HCT116 (cell line): ENCODE measurements at regions of chr17 and their contacts with region 1.

Region 1: DNA sequence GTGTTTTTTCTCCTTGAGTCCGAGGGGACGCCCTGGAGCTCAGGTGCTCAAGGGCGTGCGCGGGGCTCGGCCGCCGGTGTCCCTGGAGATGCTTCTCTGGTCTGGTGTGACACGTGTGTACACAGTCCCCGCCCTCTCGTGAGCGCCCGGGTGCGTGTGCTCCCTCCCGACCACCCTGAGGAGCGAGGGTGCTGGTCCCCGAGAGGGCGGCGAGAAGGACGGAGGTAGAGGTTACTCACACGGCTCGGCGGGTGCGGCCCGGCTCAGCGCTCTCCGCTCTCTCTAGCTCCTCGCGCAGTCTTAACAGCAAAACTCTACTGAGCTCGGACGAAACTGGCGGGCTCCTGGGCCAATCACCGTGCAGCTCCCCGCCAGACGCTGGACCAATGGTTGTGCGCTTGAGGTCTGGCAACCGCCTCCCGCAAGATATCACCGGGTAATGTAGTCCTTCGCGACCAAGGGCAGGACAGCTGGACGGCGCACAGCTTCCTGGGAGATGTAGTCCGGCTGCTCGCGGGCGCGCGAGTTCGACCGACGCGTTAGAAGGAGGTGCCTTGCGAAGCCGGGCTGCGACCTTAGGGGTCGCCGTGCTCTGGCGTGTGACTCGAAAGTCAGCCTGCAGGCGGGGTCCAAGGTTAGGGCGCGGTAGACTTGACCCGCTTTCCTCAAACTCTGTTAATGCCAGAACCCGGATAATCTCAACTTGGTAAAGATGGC is at the start of gene SLC25A19:
- DNase-seq: peak; percentile 99
- ATAC-seq: peak; percentile 97
- H3K4me3 ChIP-seq: peak within 1 kb of the TSS; percentile 83 to 98
- H3K27ac ChIP-seq: peak within 1 kb of the TSS; percentile 75
- H3K4me1 ChIP-seq: peaks cover 10 to 15% of the 10 kb centered on the region in 2 experiments
- H3K27me3 ChIP-seq: no peaks in the 10 kb centered on the region
- CTCF ChIP-seq: peak in 2 of 3 experiments; percentile 15 to 24; a peak in 1 of 6 replicates
- POLR2A ChIP-seq: peak; percentile 86
- RAD21 ChIP-seq: no peak
- total RNA-seq, gene SLC25A19: 38.7 TPM

Region 2: DNA sequence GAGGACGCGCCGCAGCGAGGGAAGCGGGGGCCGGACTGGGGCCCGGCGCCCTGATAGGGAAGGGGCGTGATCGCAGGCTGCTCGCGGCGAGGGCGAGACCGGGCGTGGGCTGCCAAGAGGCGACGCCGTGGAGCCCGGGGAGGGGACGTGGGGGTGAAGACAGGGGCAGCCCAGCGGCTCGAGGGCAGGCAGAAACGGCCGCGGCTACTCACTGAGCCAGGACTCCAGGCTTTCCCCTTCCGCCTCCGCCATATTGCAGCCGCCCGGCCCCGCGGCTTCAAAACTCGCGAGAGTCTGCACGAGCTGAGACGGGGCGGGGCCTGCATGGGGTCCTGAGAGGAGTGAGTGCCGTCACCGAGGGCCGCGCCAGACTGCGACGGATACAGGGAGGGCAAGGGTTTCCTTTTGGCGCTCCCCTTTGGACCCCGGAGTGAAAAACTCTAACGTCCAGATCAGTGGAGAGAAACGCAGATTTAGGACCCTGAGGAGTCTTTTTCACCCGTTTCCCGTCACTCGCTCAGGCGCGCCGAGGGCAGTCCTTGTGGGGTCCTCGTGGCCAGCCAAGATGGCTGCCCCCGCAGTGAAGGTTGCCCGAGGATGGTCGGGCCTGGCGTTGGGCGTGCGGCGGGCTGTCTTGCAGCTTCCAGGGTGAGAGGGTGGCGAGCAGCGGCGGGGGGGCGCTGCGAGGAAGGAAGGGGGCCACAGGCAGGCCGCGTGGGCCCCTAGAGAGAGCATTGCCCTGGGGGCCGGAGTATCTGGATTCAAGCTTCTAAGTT is 27.7 kb before region 1 on chr17 and contains the starts of genes GGA3 and MRPS7:
- CTCF ChIA-PET with region 1: interaction called, 3 read pairs
- POLR2A ChIA-PET with region 1: interaction called, 13 read pairs
- RAD21 ChIA-PET with region 1: no interaction called
- intact Hi-C with region 1: no loop called
- DNase-seq: peak; percentile 89
- ATAC-seq: peak; percentile 95
- H3K4me3 ChIP-seq: peak within 1 kb of the TSS; percentile 83 to 97
- H3K27ac ChIP-seq: peak within 1 kb of the TSS; percentile 80
- H3K4me1 ChIP-seq: peaks cover 17 to 21% of the 10 kb centered on the region in 2 experiments
- H3K27me3 ChIP-seq: no peaks in the 10 kb centered on the region
- CTCF ChIP-seq: no peak
- POLR2A ChIP-seq: no peak
- RAD21 ChIP-seq: no peak; the same call in 1 of the 2 replicates
- total RNA-seq, gene GGA3: 58.3 TPM
- total RNA-seq, gene MRPS7: 104 TPM

Region 3: DNA sequence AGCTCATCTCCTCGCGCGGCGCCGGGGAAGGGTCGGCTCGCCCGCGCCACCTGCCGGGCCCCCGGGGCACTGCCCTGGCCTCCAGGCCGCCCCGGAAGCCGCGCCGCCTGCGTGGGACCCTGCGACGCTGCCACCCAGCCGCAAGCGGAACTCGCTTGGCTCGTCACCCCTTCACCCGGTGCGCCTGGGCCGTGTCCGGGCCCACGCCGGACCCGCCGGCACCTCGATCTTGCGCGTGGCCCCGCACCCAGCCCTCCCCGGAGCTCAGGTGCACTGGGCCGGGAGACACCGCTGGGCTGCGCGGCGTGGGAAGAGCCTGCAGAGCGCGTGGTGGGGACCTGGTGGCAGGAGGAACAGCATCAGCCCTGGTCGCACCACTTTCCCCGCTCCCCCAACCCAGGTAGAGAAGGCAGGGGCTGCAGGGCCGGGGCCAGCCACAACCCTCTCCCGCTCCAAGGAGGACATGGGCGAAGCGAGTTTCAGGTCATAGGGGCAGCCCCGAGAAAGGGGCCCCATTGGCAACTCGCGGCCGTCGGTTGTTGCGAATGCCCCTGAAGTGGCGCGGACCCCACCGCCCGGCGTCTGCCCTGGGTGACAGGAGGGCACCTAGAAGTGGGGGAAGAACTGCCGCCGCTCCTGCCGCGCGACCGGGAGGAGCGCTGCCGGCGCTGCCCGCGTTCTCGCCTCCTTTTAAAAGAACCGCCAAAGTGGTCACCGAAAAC is 17.9 kb before region 1 on chr17:
- CTCF ChIA-PET with region 1: interaction called, 51 read pairs
- POLR2A ChIA-PET with region 1: interaction called, 40 read pairs
- RAD21 ChIA-PET with region 1: interaction called, 3 to 5 read pairs
- intact Hi-C with region 1: no loop called
- DNase-seq: no peak
- ATAC-seq: peak; percentile 72
- H3K4me3 ChIP-seq: peak overlapping the region; percentile 90 to 98
- H3K27ac ChIP-seq: peak overlapping the region; percentile 94
- H3K4me1 ChIP-seq: peaks cover 16 to 45% of the 10 kb centered on the region in 2 experiments
- H3K27me3 ChIP-seq: no peaks in the 10 kb centered on the region
- CTCF ChIP-seq: peak in 2 of 3 experiments; percentile 54 to 61; a peak in 4 of 6 replicates
- POLR2A ChIP-seq: peak; percentile 79
- RAD21 ChIP-seq: 0 out of 2 replicates have a peak, but pooled peaks have one; percentile 19

Region 4: DNA sequence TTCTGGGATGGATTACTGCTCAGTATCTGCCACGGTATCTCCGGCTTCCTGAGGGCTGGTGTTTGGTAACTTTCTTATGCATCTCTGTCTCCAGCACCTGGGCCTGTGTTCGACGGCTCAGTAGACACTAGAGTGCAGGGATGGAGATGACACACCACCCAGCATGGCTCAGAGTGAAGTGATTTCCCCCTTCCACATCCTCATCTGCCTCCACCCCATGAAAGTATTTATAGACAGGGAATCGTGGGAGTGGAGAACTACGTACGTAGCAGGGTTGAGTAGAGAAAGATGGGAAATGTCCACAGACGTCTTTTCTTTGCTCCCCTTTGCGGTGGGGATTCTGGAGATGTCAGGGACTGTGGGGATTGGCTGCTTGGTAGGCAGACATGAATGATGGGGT is 11.8 kb after region 1 on chr17:
- CTCF ChIA-PET with region 1: no interaction called
- POLR2A ChIA-PET with region 1: interaction called, 11 read pairs
- RAD21 ChIA-PET with region 1: no interaction called
- intact Hi-C with region 1: no loop called
- DNase-seq: no peak
- ATAC-seq: no peak
- H3K4me3 ChIP-seq: no peak overlapping the region
- H3K27ac ChIP-seq: no peak overlapping the region
- H3K4me1 ChIP-seq: no peaks in the 10 kb centered on the region
- H3K27me3 ChIP-seq: no peaks in the 10 kb centered on the region
- CTCF ChIP-seq: no peak
- POLR2A ChIP-seq: no peak
- RAD21 ChIP-seq: no peak

Region 5: DNA sequence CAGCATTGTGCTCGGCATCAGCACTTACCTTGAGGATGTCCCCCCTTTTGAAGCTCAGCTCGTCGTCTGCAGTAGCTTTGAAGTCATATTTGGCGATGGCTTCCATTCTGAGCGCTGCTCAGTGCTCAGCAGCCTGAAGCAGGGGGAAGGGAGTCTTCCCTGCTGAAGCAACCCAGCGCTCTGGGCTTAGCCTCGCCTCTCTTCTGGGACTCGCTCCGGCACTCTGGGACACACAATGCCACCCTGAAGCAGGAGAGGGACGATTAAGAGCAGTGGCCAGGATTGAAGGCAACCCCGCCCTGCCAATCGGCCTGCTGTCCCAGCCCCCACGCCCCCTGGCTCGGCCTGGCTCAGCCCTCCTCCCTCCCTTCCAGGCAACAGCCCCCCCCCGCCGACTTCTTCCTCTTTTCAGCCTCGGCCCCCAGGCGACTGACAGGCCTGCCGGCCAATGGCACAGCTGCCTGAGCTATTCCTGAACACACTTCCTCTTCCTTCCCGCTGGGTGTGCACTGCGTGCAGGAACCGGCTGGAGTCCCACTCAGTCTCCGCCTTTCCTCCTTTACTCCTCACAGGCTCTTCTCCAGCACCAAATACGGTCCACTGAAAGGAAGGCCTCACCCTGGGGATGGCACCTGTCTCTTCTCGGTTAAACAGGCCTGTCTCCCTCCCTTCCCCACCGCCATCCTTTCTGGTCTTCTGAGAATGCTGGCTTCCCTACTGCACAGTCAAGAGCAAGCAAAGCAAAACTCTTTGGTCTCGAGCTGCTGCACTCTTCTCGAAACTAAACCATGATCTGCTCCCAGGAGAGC is 104.5 kb after region 1 on chr17:
- CTCF ChIA-PET with region 1: no interaction called
- POLR2A ChIA-PET with region 1: interaction called, 11 read pairs
- RAD21 ChIA-PET with region 1: no interaction called
- intact Hi-C with region 1: no loop called
- DNase-seq: peak; percentile 95
- ATAC-seq: peak; percentile 99
- H3K4me3 ChIP-seq: peak overlapping the region; percentile 50 to 75
- H3K27ac ChIP-seq: peak overlapping the region; percentile 60
- H3K4me1 ChIP-seq: peaks cover 23 to 30% of the 10 kb centered on the region in 2 experiments
- H3K27me3 ChIP-seq: no peaks in the 10 kb centered on the region
- CTCF ChIP-seq: no peak; a peak in 1 of 6 replicates
- POLR2A ChIP-seq: peak; percentile 52
- RAD21 ChIP-seq: no peak

Region 6: GRCh38 chr17:75405365-75406221 is 116.3 kb after region 1 on chr17 and contains the start of gene GRB2:
- CTCF ChIA-PET with region 1: interaction called, 9 read pairs
- POLR2A ChIA-PET with region 1: interaction called, 15 read pairs
- RAD21 ChIA-PET with region 1: interaction called in 1 of 2 experiments, 5 read pairs
- intact Hi-C with region 1: no loop called
- DNase-seq: peak; percentile 94
- ATAC-seq: peak; percentile 92
- H3K4me3 ChIP-seq: peak within 1 kb of the TSS; percentile 97
- H3K27ac ChIP-seq: peak within 1 kb of the TSS; percentile 87
- H3K4me1 ChIP-seq: peaks cover 5 to 19% of the 10 kb centered on the region in 2 experiments
- H3K27me3 ChIP-seq: no peaks in the 10 kb centered on the region
- CTCF ChIP-seq: no peak
- POLR2A ChIP-seq: peak; percentile 68
- RAD21 ChIP-seq: no peak
- total RNA-seq, gene GRB2: 146 TPM

Region 7: DNA sequence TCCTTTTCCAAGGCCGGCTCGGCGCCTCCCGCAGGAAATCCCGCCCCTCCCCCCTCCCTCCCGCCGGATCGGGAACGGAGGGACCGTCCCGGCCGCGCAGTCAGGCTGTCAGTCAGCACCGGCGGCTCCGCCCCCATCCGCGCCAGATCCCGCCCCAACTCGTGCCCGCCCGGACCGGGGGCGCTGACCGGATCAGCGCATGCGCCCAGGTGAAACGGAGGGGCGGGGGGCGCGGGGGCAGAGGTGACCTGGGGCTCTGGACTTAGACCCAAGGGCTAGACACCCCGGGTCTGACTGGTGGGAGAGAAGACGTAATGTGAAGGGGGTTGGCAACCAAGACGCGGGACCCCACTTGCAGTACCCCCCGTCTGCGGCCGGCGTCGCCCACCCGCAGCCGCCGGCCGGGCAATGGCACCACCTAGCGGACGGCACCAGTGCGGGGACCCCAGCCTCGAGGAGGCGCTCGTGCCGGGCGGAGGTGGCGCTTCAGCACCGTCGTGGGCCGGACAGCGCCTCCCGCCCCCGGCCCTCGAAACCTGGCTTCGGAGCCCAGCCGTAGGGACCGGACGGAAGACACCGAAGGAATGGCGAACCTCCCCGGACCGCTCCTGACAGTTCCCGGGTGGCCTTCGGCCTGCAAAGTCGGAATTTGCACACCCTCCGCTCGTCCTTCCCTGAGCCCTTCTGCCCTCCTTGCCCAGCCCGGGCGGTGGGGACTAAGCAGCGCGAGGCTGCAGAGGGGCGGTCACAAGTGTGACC is 226.4 kb after region 1 on chr17 and contains the start of gene CASKIN2:
- CTCF ChIA-PET with region 1: interaction called, 3 read pairs
- POLR2A ChIA-PET with region 1: interaction called, 3 read pairs
- RAD21 ChIA-PET with region 1: no interaction called
- intact Hi-C with region 1: loop called (anchors 1 kb)
- DNase-seq: peak; percentile 88
- ATAC-seq: peak; percentile 77
- H3K4me3 ChIP-seq: peak within 1 kb of the TSS; percentile 87 to 91
- H3K27ac ChIP-seq: peak within 1 kb of the TSS; percentile 86
- H3K4me1 ChIP-seq: peaks cover 28 to 60% of the 10 kb centered on the region in 2 experiments
- H3K27me3 ChIP-seq: no peaks in the 10 kb centered on the region
- CTCF ChIP-seq: peak; percentile 100
- POLR2A ChIP-seq: no peak
- RAD21 ChIP-seq: peak; percentile 94
- total RNA-seq, gene CASKIN2: 38.4 TPM